ENCODE measurements at regions of chr2 and their contacts with region 1.

Region 1: GRCh38 chr2:27099334-27099955 is 12.9 kb downstream of the KHK start:
- DNase-seq: no peak
- H3K4me3 ChIP-seq: no peak overlapping the region
- H3K27ac ChIP-seq: no peak overlapping the region
- H3K4me1 ChIP-seq: peaks cover 4 to 10% of the 10 kb centered on the region in 2 donors
- H3K27me3 ChIP-seq: no peaks in the 10 kb centered on the region
- CTCF ChIP-seq: no peak

Region 2: GRCh38 chr2:26982102-26982742 is 117.2 kb before region 1 on chr2:
- intact Hi-C with region 1: no loop called
- DNase-seq: peak in 1 of 2 donors; percentile 75
- H3K4me3 ChIP-seq: no peak overlapping the region
- H3K27ac ChIP-seq: no peak overlapping the region
- H3K4me1 ChIP-seq: no peaks in the 10 kb centered on the region
- H3K27me3 ChIP-seq: no peaks in the 10 kb centered on the region
- CTCF ChIP-seq: peak in 2 of 3 experiments; percentile 15 to 33

Region 3: DNA sequence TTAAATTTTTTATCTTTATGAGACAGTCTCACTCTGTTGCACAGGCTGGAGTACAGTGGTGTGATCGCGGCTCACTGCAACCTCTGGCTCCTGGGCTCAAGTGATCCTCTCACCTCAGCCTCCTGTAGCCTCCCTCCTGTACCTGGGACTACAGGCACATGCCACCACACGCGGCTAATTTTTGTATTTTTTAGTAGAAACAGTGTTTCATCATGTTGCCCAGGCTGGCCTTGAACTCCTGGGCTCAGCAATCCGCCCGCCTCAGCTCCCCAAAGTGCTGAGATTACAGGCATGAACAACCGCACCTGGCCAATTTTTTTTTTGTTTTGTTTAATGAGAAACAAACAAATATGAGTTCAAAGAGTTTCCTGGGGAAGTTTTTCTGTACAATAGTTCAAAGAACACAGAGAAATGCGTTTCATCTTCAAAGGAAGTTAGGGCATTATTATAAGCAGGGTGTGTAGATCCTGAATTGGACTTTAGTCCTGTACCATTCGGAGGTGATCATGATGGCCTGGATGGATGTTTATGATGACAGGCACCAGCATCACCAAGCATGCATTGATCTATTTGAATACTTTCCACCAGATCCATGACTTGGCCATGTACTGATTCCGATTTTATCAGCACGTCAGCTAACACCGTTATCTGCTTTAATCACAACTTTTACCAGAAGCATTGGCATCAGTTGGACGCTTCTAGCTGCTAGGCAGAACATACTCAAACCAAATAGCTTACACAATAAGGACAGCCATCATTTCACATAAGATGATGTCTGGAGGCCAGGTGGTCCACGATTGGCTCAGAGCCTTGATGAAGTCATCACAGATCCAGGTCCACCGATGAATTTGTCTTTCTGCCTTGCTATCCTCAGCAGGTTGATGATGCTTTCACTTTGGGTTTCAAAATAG is 78.3 kb after region 1 on chr2:
- intact Hi-C with region 1: no loop called
- DNase-seq: no peak
- H3K4me3 ChIP-seq: no peak overlapping the region
- H3K27ac ChIP-seq: no peak overlapping the region
- H3K4me1 ChIP-seq: no peaks in the 10 kb centered on the region
- H3K27me3 ChIP-seq: no peaks in the 10 kb centered on the region
- CTCF ChIP-seq: no peak

Region 4: DNA sequence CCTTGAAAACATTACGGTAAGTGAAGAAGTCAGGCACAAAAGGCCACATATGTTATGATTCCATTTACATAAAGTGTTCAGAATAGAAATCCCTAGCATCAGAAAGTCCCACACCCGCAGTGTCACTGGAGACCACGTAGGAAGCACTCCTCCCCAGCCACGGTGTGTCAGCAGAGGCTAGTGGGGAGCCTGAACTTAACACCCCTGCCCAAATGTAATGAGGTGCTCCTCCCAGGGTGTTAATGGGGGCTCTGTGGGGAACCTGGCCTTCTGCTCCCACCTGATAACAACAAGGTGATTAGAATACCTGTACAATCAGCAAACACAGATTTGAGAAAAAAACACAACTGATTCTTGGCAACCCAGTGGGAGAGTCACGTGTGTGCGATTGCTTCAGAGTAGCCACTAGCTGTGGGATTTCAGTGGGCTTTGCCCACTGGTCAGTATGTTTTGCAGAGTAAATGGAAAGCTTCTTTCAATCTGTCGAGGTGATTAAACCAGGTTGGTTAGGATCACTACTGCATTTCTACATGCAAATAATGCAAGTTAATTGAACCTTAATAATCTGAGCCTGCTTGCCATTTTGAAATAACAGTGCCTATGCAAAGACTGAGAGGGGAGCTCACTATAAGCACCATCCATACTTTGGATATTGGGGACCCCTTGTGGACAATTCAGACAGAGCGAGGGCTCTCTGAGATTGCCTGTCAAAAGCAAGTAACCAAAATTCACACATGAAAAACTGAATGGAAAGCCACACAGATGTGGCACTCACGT is 91.8 kb after region 1 on chr2:
- intact Hi-C with region 1: loop called (anchors 2 kb)
- DNase-seq: no peak
- H3K4me3 ChIP-seq: no peak overlapping the region
- H3K27ac ChIP-seq: no peak overlapping the region
- H3K4me1 ChIP-seq: peaks cover 0 to under 1% of the 10 kb centered on the region in 2 donors
- H3K27me3 ChIP-seq: no peaks in the 10 kb centered on the region
- CTCF ChIP-seq: peak; percentile 42 to 60 (median 56)

Region 5: DNA sequence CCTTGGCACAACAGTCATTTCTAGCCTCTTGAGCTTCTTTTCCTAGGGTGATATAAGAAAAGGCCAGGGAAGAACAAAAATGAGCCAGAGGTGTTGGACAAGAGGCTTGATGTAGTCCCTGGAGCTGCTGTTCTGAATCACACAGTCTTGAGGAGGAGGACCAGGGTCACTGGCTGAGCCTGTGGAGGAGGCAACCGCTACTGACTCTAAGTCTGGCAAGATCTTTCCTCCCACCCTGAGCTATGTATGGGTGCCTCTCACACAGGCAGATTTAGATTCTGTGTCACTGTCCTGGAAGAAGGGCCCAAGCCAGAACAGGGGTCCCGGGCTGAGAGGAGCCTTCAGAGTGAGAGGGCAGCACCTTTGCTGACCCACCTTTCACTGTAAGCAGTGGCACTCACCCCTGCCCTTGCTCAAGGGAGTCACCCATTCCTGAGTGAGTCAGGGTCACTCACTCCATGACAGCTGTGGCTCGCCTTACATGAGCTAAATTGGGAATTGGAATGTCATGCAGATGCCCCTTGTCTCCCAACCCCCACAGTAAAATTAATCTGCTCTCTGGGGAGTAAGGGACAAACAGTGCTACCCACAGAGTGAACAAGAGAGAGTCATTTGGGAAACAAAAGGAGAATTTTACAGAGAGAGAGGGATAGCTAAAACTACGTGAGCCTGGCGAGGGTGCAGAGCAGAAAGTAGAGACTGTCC is 182.6 kb after region 1 on chr2 and contains the start of gene TRIM54:
- intact Hi-C with region 1: loop called (anchors 1 kb)
- DNase-seq: no peak
- H3K4me3 ChIP-seq: no peak within 1 kb of the TSS
- H3K27ac ChIP-seq: no peak within 1 kb of the TSS
- H3K4me1 ChIP-seq: no peaks in the 10 kb centered on the region
- H3K27me3 ChIP-seq: no peaks in the 10 kb centered on the region
- CTCF ChIP-seq: no peak
- total RNA-seq, gene TRIM54: not detected